ENCODE measurements at regions of chr7 and their contacts with region 1.

Region 1: DNA sequence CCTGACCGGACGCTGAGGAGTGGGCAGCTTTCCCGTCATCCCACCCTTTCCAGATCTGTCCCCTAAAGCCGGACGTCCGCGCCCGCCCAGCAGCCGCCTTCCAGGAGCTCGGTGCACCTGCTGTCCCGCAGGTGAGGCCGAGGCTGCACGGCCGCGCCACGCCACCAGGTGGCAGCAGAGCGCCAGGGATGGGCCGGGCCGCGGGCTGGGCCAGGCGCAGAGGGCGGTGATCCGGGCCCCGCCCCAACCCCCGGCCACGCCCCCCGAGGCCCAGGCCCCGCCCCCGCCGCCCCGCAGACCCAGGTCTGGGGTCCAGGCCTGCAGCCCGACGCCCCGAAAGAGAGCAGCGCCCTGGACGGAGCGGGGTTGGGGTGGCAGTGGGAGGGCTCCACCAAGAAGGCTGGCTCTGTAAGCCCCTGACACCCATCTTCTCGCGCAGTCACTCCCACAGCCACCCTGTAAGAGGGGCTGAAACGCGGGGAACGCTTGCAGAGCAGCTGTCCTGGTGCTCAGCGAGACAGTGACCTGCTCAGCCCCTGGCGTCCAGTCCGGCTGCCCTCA is 32.2 kb downstream of the FOXL3 start:
- DNase-seq: peak in 1 of 2 donors; percentile 45
- H3K4me3 ChIP-seq: no peak overlapping the region
- CTCF ChIP-seq: no peak
- POLR2A ChIP-seq: no peak

Region 2: GRCh38 chr7:776992-777727 is 455.0 kb after region 1 on chr7:
- intact Hi-C with region 1: loop called (anchors 2 kb)
- DNase-seq: no peak
- H3K4me3 ChIP-seq: no peak overlapping the region
- CTCF ChIP-seq: no peak
- POLR2A ChIP-seq: no peak

Region 3: DNA sequence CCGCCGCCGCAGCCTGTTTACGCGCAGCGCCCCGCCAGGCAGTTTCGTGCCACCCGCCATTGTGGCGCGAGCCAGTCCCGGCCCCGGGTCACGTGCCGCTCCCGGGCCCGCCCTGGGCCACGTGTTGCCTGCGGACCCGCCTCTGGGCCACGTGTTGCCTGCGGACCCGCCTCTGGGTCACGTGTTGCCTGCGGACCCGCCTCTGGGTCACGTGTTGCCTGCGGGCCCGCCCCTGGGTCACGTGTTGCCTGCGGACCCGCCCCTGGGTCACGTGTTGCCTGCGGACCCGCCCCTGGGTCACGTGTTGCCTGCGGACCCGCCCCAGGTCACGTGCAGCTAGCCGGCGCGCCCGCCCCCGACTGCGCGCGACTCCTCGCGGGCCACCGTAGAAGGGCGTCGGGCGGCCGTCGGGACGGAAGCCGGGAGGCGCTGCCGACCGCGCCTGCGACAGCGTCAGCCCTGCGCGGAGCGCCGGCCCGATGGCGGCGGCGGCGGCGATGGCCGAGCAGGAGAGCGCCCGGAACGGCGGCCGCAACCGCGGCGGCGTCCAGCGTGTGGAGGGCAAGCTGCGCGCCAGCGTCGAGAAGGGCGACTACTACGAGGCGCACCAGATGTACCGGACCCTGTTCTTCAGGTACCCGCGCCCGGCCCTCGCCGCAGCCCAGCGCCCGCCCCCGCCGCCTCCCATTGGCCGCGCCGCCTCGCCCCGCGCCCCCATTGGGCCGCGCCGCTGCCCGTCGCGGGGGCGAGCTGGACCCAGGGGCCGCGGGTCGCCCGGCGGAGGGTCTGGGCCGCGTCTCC is 554.2 kb after region 1 on chr7 and contains the start of gene GET4:
- intact Hi-C with region 1: loop called (anchors 10 kb)
- DNase-seq: peak; percentile 94 to 99
- H3K4me3 ChIP-seq: peak within 1 kb of the TSS; percentile 84
- CTCF ChIP-seq: no peak
- POLR2A ChIP-seq: peak in 1 of 2 donors; percentile 74
- total RNA-seq, gene GET4: 46.1 to 67.7 (median 51.6) TPM

Measured in lower leg skin (tissue), 4 donors.